Activated naive CD4-positive, alpha-beta T cell treated with anti-CD3 and anti-CD28 coated beads for 36 hours (primary cell): ENCODE measurements at regions of chr12 and their contacts with region 1.

Region 1: GRCh38 chr12:45234139-45234846 is 18.4 kb downstream of the ANO6 start:
- DNase-seq: no peak
- H3K4me3 Mint-ChIP-seq: peak overlapping the region; percentile 35
- H3K27ac Mint-ChIP-seq: peak overlapping the region; percentile 83
- H3K4me1 Mint-ChIP-seq: peaks cover 65% of the 10 kb centered on the region
- H3K27me3 Mint-ChIP-seq: no peaks in the 10 kb centered on the region

Region 2: GRCh38 chr12:45192707-45193106 is 41.6 kb before region 1 on chr12:
- CTCF ChIA-PET with region 1: interaction called, 4 read pairs
- intact Hi-C with region 1: loop called (anchors 2 kb)
- DNase-seq: no peak
- H3K4me3 Mint-ChIP-seq: no peak overlapping the region
- H3K27ac Mint-ChIP-seq: no peak overlapping the region
- H3K4me1 Mint-ChIP-seq: peaks cover 15% of the 10 kb centered on the region
- H3K27me3 Mint-ChIP-seq: no peaks in the 10 kb centered on the region

Region 3: DNA sequence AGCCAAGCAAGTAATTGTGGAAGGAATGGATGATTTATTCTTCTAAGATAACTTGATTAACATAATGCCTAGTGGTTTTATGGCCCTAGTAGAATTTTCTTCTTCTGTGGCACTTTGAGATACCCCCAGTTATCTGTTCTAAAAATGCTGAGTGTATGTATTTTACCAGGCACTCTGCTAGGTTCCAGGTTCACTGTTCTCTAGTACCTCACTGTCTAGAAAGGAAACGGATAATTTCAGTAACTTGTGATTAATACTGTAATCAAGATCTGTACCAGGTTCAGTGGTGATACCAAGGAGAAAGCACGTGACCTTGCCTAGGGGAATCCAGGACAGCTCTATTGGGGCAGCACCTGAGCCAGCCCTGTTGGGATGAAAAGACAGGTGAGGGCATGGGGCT is 10.4 kb before region 1 on chr12:
- CTCF ChIA-PET with region 1: no interaction called
- intact Hi-C with region 1: loop called (anchors 1 kb)
- DNase-seq: peak; percentile 36
- H3K4me3 Mint-ChIP-seq: no peak overlapping the region
- H3K27ac Mint-ChIP-seq: no peak overlapping the region
- H3K4me1 Mint-ChIP-seq: peaks cover 48% of the 10 kb centered on the region
- H3K27me3 Mint-ChIP-seq: no peaks in the 10 kb centered on the region

Region 4: DNA sequence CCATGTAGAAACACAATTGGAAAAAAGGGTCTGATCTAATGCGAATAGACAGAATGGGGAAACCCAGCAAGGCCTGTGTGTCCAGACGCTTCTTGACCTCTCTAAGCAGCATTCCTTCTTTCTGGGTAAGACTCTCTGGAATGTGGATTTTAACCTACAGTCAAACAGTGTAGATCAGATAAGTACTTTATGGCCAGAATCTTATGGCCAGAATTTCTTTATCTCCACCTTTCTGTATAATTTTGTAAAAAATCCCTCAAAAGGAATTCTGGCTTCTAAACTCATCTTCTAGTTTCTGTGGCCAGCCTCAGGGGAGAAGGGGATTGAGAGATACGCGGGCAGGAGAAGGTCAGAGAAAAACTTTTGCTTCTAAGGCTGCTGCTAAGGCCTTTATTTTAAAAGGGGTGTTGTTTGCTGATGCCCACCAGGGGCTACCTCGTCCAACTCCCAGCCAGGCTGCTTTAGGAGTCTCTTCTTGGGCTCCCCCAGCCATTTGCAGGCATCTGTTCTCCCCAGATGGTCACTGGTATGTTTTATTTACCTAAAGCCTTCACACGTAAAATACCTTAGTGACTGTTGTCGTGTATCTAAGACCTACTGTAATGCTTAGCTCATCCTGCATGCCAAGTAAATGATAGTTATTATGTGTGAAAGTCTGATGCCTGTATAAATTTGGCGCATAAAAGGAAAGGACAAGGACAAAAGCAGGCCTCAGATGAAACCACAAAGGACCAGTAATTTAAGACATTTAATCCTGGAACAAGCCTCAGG is 50.0 kb after region 1 on chr12:
- CTCF ChIA-PET with region 1: no interaction called
- intact Hi-C with region 1: no loop called
- DNase-seq: no peak
- H3K4me3 Mint-ChIP-seq: no peak overlapping the region
- H3K27ac Mint-ChIP-seq: no peak overlapping the region
- H3K4me1 Mint-ChIP-seq: peaks cover 6% of the 10 kb centered on the region
- H3K27me3 Mint-ChIP-seq: no peaks in the 10 kb centered on the region

Region 5: GRCh38 chr12:45324391-45324790 is 90.1 kb after region 1 on chr12:
- CTCF ChIA-PET with region 1: no interaction called
- intact Hi-C with region 1: loop called (anchors 1 kb)
- DNase-seq: peak; percentile 8
- H3K4me3 Mint-ChIP-seq: no peak overlapping the region
- H3K27ac Mint-ChIP-seq: peak overlapping the region; percentile 22
- H3K4me1 Mint-ChIP-seq: peaks cover 14% of the 10 kb centered on the region
- H3K27me3 Mint-ChIP-seq: no peaks in the 10 kb centered on the region

Region 6: DNA sequence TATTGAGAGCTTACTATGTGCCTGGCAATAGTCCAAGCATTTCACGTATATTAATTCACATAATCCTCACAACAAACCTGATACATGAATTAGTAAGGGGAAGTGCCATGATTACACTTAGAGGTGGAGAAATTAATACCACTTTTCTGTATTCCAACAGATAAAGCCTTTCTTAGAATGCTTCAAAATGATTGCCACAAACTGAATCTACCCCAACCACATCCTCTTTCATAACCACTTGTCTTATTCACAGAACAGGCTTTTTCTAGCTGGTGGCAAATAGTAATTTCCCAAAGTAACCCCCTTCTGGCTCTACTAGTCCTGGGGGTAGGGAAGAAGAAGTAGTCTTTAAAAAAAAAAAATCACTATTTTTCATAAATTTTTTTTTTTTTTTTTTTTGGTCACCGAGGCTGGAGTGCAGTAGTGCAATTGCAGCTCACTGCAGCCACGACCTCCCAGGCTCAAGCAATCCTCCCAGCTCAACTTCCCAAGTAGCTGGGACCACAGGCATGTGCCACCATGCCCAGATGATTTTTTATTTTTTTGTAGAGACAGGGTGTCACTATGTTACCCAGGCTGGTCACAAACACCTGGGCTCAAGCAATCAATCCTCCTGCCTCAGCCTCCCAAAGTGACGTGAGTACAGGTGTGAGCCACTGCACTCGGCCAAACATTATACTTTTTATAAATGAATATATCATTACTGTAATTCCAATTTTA is 436.2 kb after region 1 on chr12:
- CTCF ChIA-PET with region 1: no interaction called
- intact Hi-C with region 1: loop called (anchors 1 kb)
- DNase-seq: no peak
- H3K4me3 Mint-ChIP-seq: no peak overlapping the region
- H3K27ac Mint-ChIP-seq: no peak overlapping the region
- H3K4me1 Mint-ChIP-seq: peaks cover 30% of the 10 kb centered on the region
- H3K27me3 Mint-ChIP-seq: peaks cover 7% of the 10 kb centered on the region

Region 7: DNA sequence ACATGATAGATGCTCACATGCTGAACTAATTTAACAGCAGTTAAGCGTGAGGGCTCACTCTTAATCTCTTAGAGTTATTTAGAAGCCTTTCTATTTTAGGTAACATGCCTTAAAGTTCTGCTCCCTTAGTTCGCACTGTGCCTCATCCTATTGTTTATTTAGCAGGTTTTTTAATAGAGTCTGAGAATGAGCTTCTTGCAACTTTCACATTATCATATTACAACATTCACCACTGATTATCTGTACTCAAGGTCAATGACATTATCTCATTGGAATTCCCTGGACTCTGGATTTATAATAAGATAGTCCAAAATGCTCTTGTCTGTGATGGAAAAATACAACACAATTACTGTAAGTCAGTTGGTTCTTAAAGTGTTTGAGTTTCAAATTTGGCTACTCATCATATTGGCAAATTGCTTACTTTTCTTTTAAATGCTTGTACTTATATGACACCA is 1321.8 kb after region 1 on chr12:
- CTCF ChIA-PET with region 1: no interaction called
- intact Hi-C with region 1: loop called (anchors 10 kb)
- DNase-seq: no peak
- H3K4me3 Mint-ChIP-seq: no peak overlapping the region
- H3K27ac Mint-ChIP-seq: peak overlapping the region; percentile 70
- H3K4me1 Mint-ChIP-seq: peaks cover 48% of the 10 kb centered on the region
- H3K27me3 Mint-ChIP-seq: no peaks in the 10 kb centered on the region